GM12878 (cell line): ENCODE measurements at regions of chr6 and their contacts with region 1.

Region 1: GRCh38 chr6:130961148-130961547 is 101.9 kb downstream of the EPB41L2 start:
- DNase-seq: peak; percentile 57
- ATAC-seq: peak; percentile 82
- H3K4me3 ChIP-seq: no peak overlapping the region
- H3K27ac ChIP-seq: no peak overlapping the region
- H3K4me1 ChIP-seq: peaks cover 8% of the 10 kb centered on the region
- H3K27me3 ChIP-seq: no peaks in the 10 kb centered on the region
- CTCF ChIP-seq: no peak
- EP300 ChIP-seq: peak in 1 of 2 experiments; percentile 33; a peak in 1 of 4 replicates
- POLR2A ChIP-seq: no peak
- RAD21 ChIP-seq: no peak

Region 2: DNA sequence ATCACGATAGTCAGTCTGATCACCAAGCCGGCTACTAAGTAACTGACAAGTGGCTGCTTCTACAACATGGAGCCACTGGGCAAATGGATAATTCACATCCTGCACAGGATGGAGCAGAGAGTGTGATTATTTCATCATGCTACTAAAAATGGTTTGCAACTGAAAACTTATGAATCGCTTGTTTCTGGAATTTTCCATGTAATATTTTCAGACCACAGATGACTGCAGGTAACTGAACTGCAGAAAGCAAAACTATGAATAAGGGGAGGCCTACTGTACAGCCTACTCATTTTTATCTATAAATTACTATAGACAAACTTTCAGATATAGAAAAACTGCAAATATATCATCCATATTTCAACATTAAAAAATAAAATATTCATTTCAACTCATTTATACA is 10.4 kb after region 1 on chr6:
- CTCF ChIA-PET with region 1: no interaction called
- POLR2A ChIA-PET with region 1: interaction called, 13 read pairs
- RAD21 ChIA-PET with region 1: no interaction called
- SMC1A ChIA-PET with region 1: interaction called, 3 read pairs
- in situ Hi-C with region 1: no loop called
- intact Hi-C with region 1: no loop called
- DNase-seq: no peak
- ATAC-seq: no peak
- H3K4me3 ChIP-seq: no peak overlapping the region
- H3K27ac ChIP-seq: no peak overlapping the region
- H3K4me1 ChIP-seq: no peaks in the 10 kb centered on the region
- H3K27me3 ChIP-seq: no peaks in the 10 kb centered on the region
- CTCF ChIP-seq: no peak
- EP300 ChIP-seq: no peak
- POLR2A ChIP-seq: no peak
- RAD21 ChIP-seq: no peak

Region 3: DNA sequence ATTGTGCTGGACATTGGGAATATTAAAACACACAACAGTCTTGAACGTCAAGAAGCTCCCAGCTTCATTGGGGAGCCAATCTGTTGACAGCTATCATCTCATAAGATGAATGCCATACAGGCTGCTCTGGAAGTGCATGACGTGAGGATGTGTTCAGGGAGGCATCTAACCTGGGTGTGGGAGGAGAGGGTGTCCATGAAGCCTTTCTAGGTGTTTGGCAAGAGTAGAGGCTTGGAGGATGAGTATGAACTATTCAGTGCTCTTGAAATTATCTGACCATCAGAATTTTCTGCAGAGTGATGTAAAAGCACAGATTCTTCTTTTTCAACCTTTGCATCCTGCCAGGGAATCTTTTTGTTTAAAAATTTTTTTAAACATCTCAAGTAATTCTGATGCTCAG is 185.7 kb after region 1 on chr6:
- CTCF ChIA-PET with region 1: no interaction called
- POLR2A ChIA-PET with region 1: no interaction called
- RAD21 ChIA-PET with region 1: no interaction called
- SMC1A ChIA-PET with region 1: no interaction called
- in situ Hi-C with region 1: no loop called
- intact Hi-C with region 1: no loop called
- DNase-seq: no peak
- ATAC-seq: no peak
- H3K4me3 ChIP-seq: no peak overlapping the region
- H3K27ac ChIP-seq: no peak overlapping the region
- H3K4me1 ChIP-seq: no peaks in the 10 kb centered on the region
- H3K27me3 ChIP-seq: peaks cover 0 to 1% of the 10 kb centered on the region in 2 experiments; a peak in 1 of 4 replicates
- CTCF ChIP-seq: no peak
- EP300 ChIP-seq: no peak
- POLR2A ChIP-seq: no peak
- RAD21 ChIP-seq: no peak

Region 4: DNA sequence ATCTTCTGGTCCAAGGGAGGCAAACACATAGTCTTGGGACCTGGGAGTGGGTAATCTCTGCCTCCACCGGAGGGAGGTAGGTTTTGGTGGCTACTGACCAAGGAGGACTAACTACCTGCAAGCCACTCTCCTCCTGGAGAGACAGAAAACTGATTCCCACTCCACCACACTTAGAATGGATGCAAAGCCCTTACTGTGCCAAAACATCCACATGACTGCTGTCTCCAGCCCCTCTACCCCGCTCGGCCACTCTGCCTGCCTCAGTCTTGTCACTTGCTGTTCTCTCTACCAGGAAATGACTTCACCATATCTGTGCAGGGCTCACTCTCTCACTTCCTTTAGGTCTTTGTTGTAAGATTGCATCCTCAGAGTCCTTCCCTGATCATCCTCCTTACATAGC is 482.4 kb after region 1 on chr6:
- CTCF ChIA-PET with region 1: no interaction called
- POLR2A ChIA-PET with region 1: no interaction called
- RAD21 ChIA-PET with region 1: no interaction called
- SMC1A ChIA-PET with region 1: no interaction called
- in situ Hi-C with region 1: no loop called
- intact Hi-C with region 1: no loop called
- DNase-seq: no peak
- ATAC-seq: no peak
- H3K4me3 ChIP-seq: no peak overlapping the region
- H3K27ac ChIP-seq: no peak overlapping the region
- H3K4me1 ChIP-seq: no peaks in the 10 kb centered on the region
- H3K27me3 ChIP-seq: no peaks in the 10 kb centered on the region
- CTCF ChIP-seq: no peak
- EP300 ChIP-seq: no peak
- POLR2A ChIP-seq: no peak
- RAD21 ChIP-seq: no peak